ENCODE measurements at regions of chr4 and their contacts with region 1.

Region 1: GRCh38 chr4:121823505-121824170 is at the start of gene CCNA2:
- DNase-seq: peak; percentile 90 to 97 (median 95)
- ATAC-seq: peak; percentile 98
- H3K4me3 ChIP-seq: peak within 1 kb of the TSS; percentile 62 to 74
- H3K4me3 Mint-ChIP-seq: peak within 1 kb of the TSS; percentile 91
- H3K27ac ChIP-seq: peak within 1 kb of the TSS; percentile 64 to 77
- H3K27ac Mint-ChIP-seq: peak within 1 kb of the TSS; percentile 86
- H3K4me1 ChIP-seq: peaks cover 8% of the 10 kb centered on the region
- H3K4me1 Mint-ChIP-seq: peaks cover 13% of the 10 kb centered on the region
- H3K27me3 ChIP-seq: no peaks in the 10 kb centered on the region
- H3K27me3 Mint-ChIP-seq: no peaks in the 10 kb centered on the region
- CTCF ChIP-seq: no peak
- total RNA-seq, gene CCNA2: 0.22 to 0.43 TPM

Region 2: DNA sequence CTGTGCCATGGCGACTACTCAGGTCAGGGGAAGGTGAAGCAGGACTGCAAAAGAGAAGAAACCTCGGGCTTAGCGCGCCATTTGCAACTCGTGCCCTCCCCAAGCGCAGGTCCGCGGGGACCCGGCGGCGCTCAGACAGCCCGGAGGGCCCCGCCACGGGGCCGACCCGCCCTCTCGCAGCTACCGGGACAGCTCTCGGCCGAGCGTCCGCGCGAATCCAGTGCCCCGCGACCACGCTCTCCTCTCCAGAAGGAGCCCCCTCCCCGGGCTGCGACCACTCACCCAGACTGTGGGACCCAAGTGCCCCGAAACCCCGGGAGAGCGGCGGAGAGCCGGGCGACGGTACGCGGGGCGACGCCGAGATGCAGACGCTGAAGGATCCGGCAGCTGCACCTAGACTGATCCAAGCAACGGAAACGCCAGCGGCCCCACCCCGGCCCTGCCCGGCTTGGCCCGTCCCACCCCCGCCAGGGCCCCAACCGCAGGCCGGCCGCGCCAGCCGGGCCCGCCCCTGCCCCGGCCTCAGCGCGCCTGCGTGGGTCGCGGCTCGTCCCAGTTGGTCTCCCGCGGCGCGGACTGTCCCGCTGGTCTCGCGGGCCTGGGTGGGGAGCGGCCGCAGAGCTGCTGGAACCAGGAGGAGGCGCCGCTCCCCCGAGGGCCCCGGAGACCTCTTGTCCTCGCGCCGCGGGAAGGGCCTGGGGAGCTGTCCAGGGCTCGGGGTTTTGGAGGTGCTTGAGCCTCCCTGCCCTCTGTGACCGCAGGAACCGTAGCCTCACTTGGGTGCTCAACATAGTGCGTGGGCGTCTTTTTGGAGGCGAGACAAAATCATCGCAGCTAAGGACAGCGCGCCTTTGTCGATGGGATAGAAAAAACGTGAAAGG is 126.8 kb before region 1 on chr4 and contains the start of gene ANXA5:
- CTCF ChIA-PET with region 1: no interaction called
- POLR2A ChIA-PET with region 1: interaction called, 3 read pairs
- intact Hi-C with region 1: loop called in 1 of 2 experiments (anchors 5 kb)
- DNase-seq: peak; percentile 37 to 80 (median 63)
- ATAC-seq: peak; percentile 76
- H3K4me3 ChIP-seq: peak within 1 kb of the TSS; percentile 67 to 79
- H3K4me3 Mint-ChIP-seq: peak within 1 kb of the TSS; percentile 91
- H3K27ac ChIP-seq: peak within 1 kb of the TSS; percentile 61 to 68
- H3K27ac Mint-ChIP-seq: peak within 1 kb of the TSS; percentile 91
- H3K4me1 ChIP-seq: peaks cover 8% of the 10 kb centered on the region
- H3K4me1 Mint-ChIP-seq: peaks cover 26% of the 10 kb centered on the region
- H3K27me3 ChIP-seq: peaks cover 0 to 6% of the 10 kb centered on the region in 2 experiments
- H3K27me3 Mint-ChIP-seq: peaks cover 4% of the 10 kb centered on the region
- CTCF ChIP-seq: no peak
- total RNA-seq, gene ANXA5: 26.8 to 28.2 TPM

Region 3: DNA sequence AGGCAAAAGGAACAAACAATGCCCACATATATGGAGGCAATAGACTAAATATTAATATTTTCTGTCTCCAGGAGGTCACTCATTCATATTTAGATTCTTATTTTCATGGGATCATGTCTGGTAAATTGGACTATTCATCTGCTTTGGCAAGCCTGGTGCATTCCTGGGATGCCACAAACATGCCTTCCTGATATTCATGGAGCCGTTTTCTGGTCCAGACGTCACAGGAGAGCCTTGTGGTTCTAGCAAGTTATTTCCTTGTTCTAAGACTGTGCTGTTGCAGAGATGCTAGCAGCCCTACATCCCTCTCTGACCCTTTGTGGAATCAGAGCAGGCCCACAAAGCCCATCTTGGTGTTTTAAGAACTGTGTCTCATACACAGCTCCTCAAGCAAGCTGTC is 38.7 kb before region 1 on chr4:
- CTCF ChIA-PET with region 1: no interaction called
- POLR2A ChIA-PET with region 1: no interaction called
- intact Hi-C with region 1: no loop called
- DNase-seq: no peak
- ATAC-seq: no peak
- H3K4me3 ChIP-seq: no peak overlapping the region
- H3K4me3 Mint-ChIP-seq: no peak overlapping the region
- H3K27ac ChIP-seq: no peak overlapping the region
- H3K27ac Mint-ChIP-seq: no peak overlapping the region
- H3K4me1 ChIP-seq: no peaks in the 10 kb centered on the region
- H3K4me1 Mint-ChIP-seq: no peaks in the 10 kb centered on the region
- H3K27me3 ChIP-seq: no peaks in the 10 kb centered on the region
- H3K27me3 Mint-ChIP-seq: peaks cover 46% of the 10 kb centered on the region
- CTCF ChIP-seq: no peak

Region 4: GRCh38 chr4:121800961-121801714 is 22.5 kb before region 1 on chr4 and contains the start of gene EXOSC9:
- CTCF ChIA-PET with region 1: no interaction called
- POLR2A ChIA-PET with region 1: interaction called, 13 read pairs
- intact Hi-C with region 1: loop called (anchors 1 kb)
- DNase-seq: peak; percentile 91 to 98 (median 95)
- ATAC-seq: peak; percentile 83
- H3K4me3 ChIP-seq: peak within 1 kb of the TSS; percentile 83 to 88
- H3K4me3 Mint-ChIP-seq: peak within 1 kb of the TSS; percentile 89
- H3K27ac ChIP-seq: peak within 1 kb of the TSS; percentile 90 to 93
- H3K27ac Mint-ChIP-seq: peak within 1 kb of the TSS; percentile 99
- H3K4me1 ChIP-seq: peaks cover 31% of the 10 kb centered on the region
- H3K4me1 Mint-ChIP-seq: peaks cover 40% of the 10 kb centered on the region
- H3K27me3 ChIP-seq: no peaks in the 10 kb centered on the region
- H3K27me3 Mint-ChIP-seq: no peaks in the 10 kb centered on the region
- CTCF ChIP-seq: no peak
- total RNA-seq, gene EXOSC9: 76.9 to 80.5 TPM

Region 5: GRCh38 chr4:121869841-121870656 is 46.4 kb after region 1 on chr4 and contains the start of gene BBS7:
- CTCF ChIA-PET with region 1: interaction called, 5 read pairs
- POLR2A ChIA-PET with region 1: interaction called, 5 read pairs
- intact Hi-C with region 1: loop called (anchors 1 to 2 kb)
- DNase-seq: peak; percentile 91 to 98 (median 96)
- ATAC-seq: peak; percentile 99
- H3K4me3 ChIP-seq: peak within 1 kb of the TSS; percentile 88 to 92
- H3K4me3 Mint-ChIP-seq: peak within 1 kb of the TSS; percentile 97
- H3K27ac ChIP-seq: peak within 1 kb of the TSS; percentile 74 to 79
- H3K27ac Mint-ChIP-seq: peak within 1 kb of the TSS; percentile 92
- H3K4me1 ChIP-seq: peaks cover 6% of the 10 kb centered on the region
- H3K4me1 Mint-ChIP-seq: peaks cover 14% of the 10 kb centered on the region
- H3K27me3 ChIP-seq: no peaks in the 10 kb centered on the region
- H3K27me3 Mint-ChIP-seq: peaks cover 7% of the 10 kb centered on the region
- CTCF ChIP-seq: no peak
- total RNA-seq, gene BBS7: 3.4 to 4.7 TPM

Region 6: GRCh38 chr4:122010610-122011009 is 187.0 kb after region 1 on chr4:
- CTCF ChIA-PET with region 1: no interaction called
- POLR2A ChIA-PET with region 1: no interaction called
- intact Hi-C with region 1: no loop called
- DNase-seq: no peak
- ATAC-seq: no peak
- H3K4me3 ChIP-seq: no peak overlapping the region
- H3K4me3 Mint-ChIP-seq: no peak overlapping the region
- H3K27ac ChIP-seq: no peak overlapping the region
- H3K27ac Mint-ChIP-seq: no peak overlapping the region
- H3K4me1 ChIP-seq: no peaks in the 10 kb centered on the region
- H3K4me1 Mint-ChIP-seq: no peaks in the 10 kb centered on the region
- H3K27me3 ChIP-seq: no peaks in the 10 kb centered on the region
- H3K27me3 Mint-ChIP-seq: peaks cover 16% of the 10 kb centered on the region
- CTCF ChIP-seq: no peak